B cell (primary cell): ENCODE measurements at regions of chr4 and their contacts with region 1.

Region 1: DNA sequence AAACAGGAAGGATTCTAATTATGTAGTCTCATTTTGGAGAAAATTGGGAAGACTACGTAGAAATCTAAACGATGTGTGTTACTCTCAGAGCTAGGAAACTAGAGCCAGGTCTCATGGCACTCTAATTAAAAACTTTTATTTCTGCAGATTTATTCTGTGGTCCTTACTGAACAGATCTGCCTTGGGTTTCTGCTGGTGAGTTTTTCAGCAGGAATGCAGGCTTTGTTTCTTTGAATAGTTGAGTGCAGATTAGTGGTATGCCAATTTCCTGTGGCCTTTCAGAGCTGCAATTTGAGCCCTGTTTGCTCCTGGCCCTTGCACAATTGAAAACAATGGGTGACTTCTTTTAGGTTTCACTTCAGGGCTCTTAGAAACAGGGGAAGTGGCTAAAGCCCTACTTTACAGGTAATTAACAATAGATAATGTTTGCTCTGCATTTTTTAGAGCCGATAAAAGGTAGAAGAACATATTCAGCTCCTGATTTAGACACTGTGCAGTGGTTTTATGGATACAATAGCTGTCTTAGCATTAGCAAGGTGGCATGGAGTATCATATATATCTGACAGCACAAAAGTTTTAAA is 21.8 kb downstream of the SPRY1 start:
- DNase-seq: no peak
- ATAC-seq: no peak
- H3K4me3 ChIP-seq: no peak overlapping the region
- H3K4me3 Mint-ChIP-seq: no peak overlapping the region
- H3K27ac ChIP-seq: peak overlapping the region; percentile 4 to 11
- H3K27ac Mint-ChIP-seq: no peak overlapping the region
- H3K4me1 ChIP-seq: peaks cover 11 to 32% of the 10 kb centered on the region in 2 donors
- H3K4me1 Mint-ChIP-seq: peaks cover 26% of the 10 kb centered on the region
- H3K27me3 ChIP-seq: no peaks in the 10 kb centered on the region
- H3K27me3 Mint-ChIP-seq: peaks cover 3% of the 10 kb centered on the region
- CTCF ChIP-seq: no peak

Region 2: GRCh38 chr4:123452616-123453015 is 34.2 kb after region 1 on chr4:
- CTCF ChIA-PET with region 1: no interaction called
- POLR2A ChIA-PET with region 1: no interaction called
- intact Hi-C with region 1: loop called (anchors 5 kb)
- DNase-seq: peak; percentile 34
- ATAC-seq: no peak
- H3K4me3 ChIP-seq: no peak overlapping the region
- H3K4me3 Mint-ChIP-seq: no peak overlapping the region
- H3K27ac ChIP-seq: no peak overlapping the region
- H3K27ac Mint-ChIP-seq: no peak overlapping the region
- H3K4me1 ChIP-seq: peaks cover 57 to 61% of the 10 kb centered on the region in 2 donors
- H3K4me1 Mint-ChIP-seq: peaks cover 51% of the 10 kb centered on the region
- H3K27me3 ChIP-seq: no peaks in the 10 kb centered on the region
- H3K27me3 Mint-ChIP-seq: no peaks in the 10 kb centered on the region
- CTCF ChIP-seq: no peak